ENCODE measurements at regions of chr11 and their contacts with region 1.

Region 1: DNA sequence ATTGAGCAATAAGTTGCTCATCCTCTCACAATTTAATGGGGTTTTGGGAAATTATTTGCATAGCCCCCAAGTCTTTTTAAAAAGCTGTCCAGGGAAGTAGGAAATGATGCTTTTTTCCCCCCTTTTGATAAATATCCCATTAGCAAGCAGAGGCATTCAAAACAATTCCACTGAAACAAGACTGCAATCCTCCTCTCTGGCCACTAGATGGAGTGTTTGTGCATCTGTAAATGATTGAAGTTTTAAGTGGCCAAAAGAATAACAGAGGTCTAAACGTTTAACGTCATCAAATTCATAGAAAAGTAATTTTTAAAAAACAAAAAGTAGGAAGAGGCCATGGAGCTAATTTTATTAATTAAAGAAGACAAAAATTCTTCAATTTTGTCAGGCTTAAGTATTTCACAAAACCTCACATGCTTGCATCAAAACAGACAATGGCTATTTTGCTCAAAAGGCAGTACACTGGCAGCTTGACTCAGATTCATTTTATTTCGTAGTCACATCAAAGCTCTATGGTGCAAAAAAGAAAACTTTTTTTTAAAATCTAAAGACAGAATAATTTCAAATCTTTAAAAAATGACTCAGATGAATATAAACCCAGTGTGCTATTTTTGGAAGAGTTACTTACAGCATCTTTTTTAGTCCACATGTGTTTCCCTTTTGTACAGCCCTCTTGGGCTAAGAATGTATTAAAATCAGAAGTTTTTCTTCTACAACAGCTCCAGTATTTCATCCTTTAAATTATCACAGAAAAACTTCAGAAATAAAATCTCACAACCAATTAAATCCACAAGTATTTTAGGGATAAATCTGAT is 17.8 kb downstream of the CHORDC1 start:
- DNase-seq: peak in 1 of 2 experiments; percentile 63
- H3K4me3 ChIP-seq: no peak overlapping the region
- H3K4me3 Mint-ChIP-seq: no peak overlapping the region
- H3K27ac Mint-ChIP-seq: peak overlapping the region; percentile 28
- H3K4me1 ChIP-seq: no peaks in the 10 kb centered on the region
- H3K4me1 Mint-ChIP-seq: peaks cover 7% of the 10 kb centered on the region
- H3K27me3 ChIP-seq: no peaks in the 10 kb centered on the region
- H3K27me3 Mint-ChIP-seq: no peaks in the 10 kb centered on the region
- CTCF ChIP-seq: peak; percentile 94 to 97

Region 2: GRCh38 chr11:88569342-88569741 is 1635.7 kb before region 1 on chr11:
- CTCF ChIA-PET with region 1: no interaction called
- POLR2A ChIA-PET with region 1: no interaction called
- intact Hi-C with region 1: no loop called
- DNase-seq: no peak
- H3K4me3 ChIP-seq: no peak overlapping the region
- H3K4me3 Mint-ChIP-seq: no peak overlapping the region
- H3K27ac Mint-ChIP-seq: no peak overlapping the region
- H3K4me1 ChIP-seq: no peaks in the 10 kb centered on the region
- H3K4me1 Mint-ChIP-seq: no peaks in the 10 kb centered on the region
- H3K27me3 ChIP-seq: no peaks in the 10 kb centered on the region
- H3K27me3 Mint-ChIP-seq: peaks cover 17% of the 10 kb centered on the region
- CTCF ChIP-seq: no peak

Region 3: GRCh38 chr11:90216611-90217010 is 11.6 kb after region 1 on chr11:
- CTCF ChIA-PET with region 1: no interaction called
- POLR2A ChIA-PET with region 1: no interaction called
- intact Hi-C with region 1: loop called (anchors 1 kb)
- DNase-seq: no peak
- H3K4me3 ChIP-seq: no peak overlapping the region
- H3K4me3 Mint-ChIP-seq: no peak overlapping the region
- H3K27ac Mint-ChIP-seq: no peak overlapping the region
- H3K4me1 ChIP-seq: peaks cover 23% of the 10 kb centered on the region
- H3K4me1 Mint-ChIP-seq: peaks cover 23% of the 10 kb centered on the region
- H3K27me3 ChIP-seq: no peaks in the 10 kb centered on the region
- H3K27me3 Mint-ChIP-seq: no peaks in the 10 kb centered on the region
- CTCF ChIP-seq: no peak

Region 4: DNA sequence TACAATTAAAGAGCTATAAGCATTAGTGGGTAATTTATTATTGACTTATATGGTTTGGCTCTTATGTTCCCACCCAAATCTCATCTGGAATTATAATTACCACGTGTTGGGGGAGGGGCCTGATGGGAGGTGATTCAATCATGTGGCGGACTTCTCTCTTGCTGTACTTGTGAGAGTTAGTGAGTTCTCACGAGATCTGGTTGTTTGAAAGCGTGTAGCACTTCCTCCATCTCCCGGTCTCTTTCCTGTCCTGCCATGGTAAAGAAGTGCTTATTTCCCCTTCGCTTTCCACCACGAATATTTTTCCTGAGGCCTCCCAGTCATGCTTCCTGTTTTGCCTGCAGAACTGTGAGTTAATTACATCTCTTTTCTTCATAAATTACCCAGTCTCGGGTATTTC is 45.9 kb after region 1 on chr11:
- CTCF ChIA-PET with region 1: no interaction called
- POLR2A ChIA-PET with region 1: no interaction called
- intact Hi-C with region 1: loop called (anchors 2 kb)
- DNase-seq: no peak
- H3K4me3 ChIP-seq: no peak overlapping the region
- H3K4me3 Mint-ChIP-seq: no peak overlapping the region
- H3K27ac Mint-ChIP-seq: no peak overlapping the region
- H3K4me1 ChIP-seq: no peaks in the 10 kb centered on the region
- H3K4me1 Mint-ChIP-seq: no peaks in the 10 kb centered on the region
- H3K27me3 ChIP-seq: no peaks in the 10 kb centered on the region
- H3K27me3 Mint-ChIP-seq: peaks cover 8% of the 10 kb centered on the region
- CTCF ChIP-seq: no peak